ENCODE measurements at regions of chr3 and their contacts with region 1.

Region 1: DNA sequence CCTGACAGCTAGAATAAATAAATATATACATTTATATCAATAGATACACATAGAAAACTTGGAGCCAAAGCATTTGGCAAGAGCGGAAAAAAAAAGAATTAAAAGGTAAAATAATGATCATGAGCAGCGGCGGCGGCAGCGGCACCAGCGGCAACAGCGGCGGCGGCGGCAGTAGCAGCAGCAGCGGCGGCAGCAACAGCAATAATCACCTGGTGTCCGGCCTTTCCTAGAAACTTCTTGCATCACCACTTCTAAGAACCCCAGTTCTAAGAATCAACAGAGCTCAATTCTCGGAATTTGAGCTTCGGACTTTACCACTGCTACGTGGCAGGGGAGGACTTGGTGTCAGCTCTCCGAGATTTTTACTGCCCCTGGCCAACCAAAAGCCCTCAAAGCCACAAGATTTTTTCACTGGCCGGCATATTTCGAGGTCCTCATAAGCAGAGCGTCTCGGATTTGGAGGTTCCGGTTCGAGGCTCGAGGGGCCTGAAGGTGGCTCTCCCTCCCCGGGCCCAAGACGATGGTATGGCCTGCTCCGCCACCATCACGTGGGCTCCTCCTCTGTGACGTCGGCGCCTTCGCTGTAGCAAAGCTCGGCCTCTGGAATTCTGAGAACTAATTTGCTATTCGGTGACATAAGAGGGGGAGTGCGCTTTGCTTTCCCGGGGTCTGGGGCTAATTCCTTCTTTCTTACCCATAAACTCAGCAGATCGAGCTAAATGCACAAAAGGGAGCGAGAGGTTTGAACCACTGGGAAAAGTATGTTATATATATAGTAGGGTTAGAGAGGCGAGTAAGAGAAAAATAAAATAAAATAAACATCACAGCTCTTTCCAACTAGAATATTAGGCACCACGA is at the start of gene BCL6:
- DNase-seq: peak; percentile 94
- ATAC-seq: peak; percentile 42
- H3K4me3 Mint-ChIP-seq: peak within 1 kb of the TSS; percentile 100
- H3K27ac Mint-ChIP-seq: peak within 1 kb of the TSS; percentile 100
- H3K4me1 Mint-ChIP-seq: peaks cover 55% of the 10 kb centered on the region
- H3K27me3 Mint-ChIP-seq: no peaks in the 10 kb centered on the region
- total RNA-seq, gene BCL6: 11.8 to 12.6 TPM

Region 2: GRCh38 chr3:187430576-187430975 is 314.9 kb before region 1 on chr3:
- CTCF ChIA-PET with region 1: no interaction called
- POLR2A ChIA-PET with region 1: no interaction called
- DNase-seq: no peak
- ATAC-seq: no peak
- H3K4me3 Mint-ChIP-seq: no peak overlapping the region
- H3K27ac Mint-ChIP-seq: no peak overlapping the region
- H3K4me1 Mint-ChIP-seq: no peaks in the 10 kb centered on the region
- H3K27me3 Mint-ChIP-seq: peaks cover 11% of the 10 kb centered on the region

Region 3: GRCh38 chr3:187802928-187803259 is 57.5 kb after region 1 on chr3:
- CTCF ChIA-PET with region 1: interaction called, 101 read pairs
- POLR2A ChIA-PET with region 1: interaction called, 195 read pairs
- DNase-seq: peak; percentile 84
- ATAC-seq: peak; percentile 55
- H3K4me3 Mint-ChIP-seq: peak overlapping the region; percentile 39
- H3K27ac Mint-ChIP-seq: peak overlapping the region; percentile 93
- H3K4me1 Mint-ChIP-seq: peaks cover 83% of the 10 kb centered on the region
- H3K27me3 Mint-ChIP-seq: no peaks in the 10 kb centered on the region

Region 4: DNA sequence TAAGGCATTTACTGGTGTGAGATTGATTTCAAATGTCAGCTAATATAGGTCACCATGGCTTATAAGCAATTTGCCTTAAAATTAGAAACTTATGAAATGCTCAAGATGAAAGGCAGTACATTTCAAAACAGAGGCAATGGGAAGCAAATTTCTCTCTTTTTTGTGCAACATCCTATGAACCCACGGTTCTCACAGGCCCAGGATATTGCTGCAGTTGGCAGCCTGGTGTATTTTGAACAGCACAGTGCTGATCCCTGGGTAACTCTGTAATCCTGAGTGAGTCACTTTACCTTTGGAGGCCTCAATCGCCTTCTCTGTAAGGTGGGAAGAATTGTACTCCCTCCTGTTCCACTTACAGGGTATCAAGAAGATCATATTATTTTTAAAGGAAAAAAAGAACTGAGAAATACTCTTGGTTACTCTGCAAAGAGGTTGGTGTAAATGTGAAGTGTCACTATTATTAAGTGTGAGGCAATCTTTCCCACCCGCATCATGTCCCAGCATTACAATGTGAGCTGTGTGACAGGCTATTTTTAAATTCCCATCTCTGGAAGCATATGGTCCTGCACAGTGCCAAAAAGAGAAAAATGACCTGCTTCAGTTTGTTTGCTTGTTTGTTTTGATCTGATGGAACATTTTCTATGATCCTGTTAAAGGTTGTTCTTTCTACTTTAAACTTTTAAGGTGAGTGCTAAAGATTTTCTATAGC is 218.4 kb after region 1 on chr3:
- CTCF ChIA-PET with region 1: interaction called, 13 read pairs
- POLR2A ChIA-PET with region 1: interaction called, 14 read pairs
- DNase-seq: no peak
- ATAC-seq: peak; percentile 62
- H3K4me3 Mint-ChIP-seq: no peak overlapping the region
- H3K27ac Mint-ChIP-seq: no peak overlapping the region
- H3K4me1 Mint-ChIP-seq: peaks cover 41% of the 10 kb centered on the region
- H3K27me3 Mint-ChIP-seq: no peaks in the 10 kb centered on the region

Region 5: DNA sequence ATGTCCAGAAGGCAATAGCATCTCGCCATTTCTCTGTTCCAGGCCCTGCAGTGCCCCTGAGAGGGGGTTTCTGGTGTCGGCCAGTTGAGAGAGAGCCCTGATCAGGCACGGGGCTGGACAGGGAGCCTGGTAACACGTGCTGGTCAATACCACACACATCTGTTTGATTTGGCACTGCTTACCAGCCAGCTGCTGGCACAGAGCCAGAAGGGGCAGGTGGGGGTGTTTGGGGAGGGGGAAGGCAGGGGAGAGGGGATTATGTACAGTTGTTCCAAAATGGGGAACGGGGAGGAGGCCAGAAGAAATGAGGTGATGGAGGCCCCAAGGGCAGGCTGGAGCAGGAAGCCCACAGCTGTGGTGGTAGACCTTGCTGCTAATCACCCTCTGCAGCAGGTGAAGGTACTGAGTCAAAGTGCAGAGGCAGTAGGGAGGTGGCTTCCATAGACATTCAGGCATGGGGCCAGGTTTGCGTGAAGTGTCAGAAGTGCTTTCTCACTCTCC is 255.0 kb after region 1 on chr3:
- CTCF ChIA-PET with region 1: interaction called, 32 read pairs
- POLR2A ChIA-PET with region 1: interaction called, 52 read pairs
- DNase-seq: peak; percentile 43
- ATAC-seq: peak; percentile 54
- H3K4me3 Mint-ChIP-seq: peak overlapping the region; percentile 76
- H3K27ac Mint-ChIP-seq: peak overlapping the region; percentile 94
- H3K4me1 Mint-ChIP-seq: peaks cover 88% of the 10 kb centered on the region
- H3K27me3 Mint-ChIP-seq: no peaks in the 10 kb centered on the region

Region 6: DNA sequence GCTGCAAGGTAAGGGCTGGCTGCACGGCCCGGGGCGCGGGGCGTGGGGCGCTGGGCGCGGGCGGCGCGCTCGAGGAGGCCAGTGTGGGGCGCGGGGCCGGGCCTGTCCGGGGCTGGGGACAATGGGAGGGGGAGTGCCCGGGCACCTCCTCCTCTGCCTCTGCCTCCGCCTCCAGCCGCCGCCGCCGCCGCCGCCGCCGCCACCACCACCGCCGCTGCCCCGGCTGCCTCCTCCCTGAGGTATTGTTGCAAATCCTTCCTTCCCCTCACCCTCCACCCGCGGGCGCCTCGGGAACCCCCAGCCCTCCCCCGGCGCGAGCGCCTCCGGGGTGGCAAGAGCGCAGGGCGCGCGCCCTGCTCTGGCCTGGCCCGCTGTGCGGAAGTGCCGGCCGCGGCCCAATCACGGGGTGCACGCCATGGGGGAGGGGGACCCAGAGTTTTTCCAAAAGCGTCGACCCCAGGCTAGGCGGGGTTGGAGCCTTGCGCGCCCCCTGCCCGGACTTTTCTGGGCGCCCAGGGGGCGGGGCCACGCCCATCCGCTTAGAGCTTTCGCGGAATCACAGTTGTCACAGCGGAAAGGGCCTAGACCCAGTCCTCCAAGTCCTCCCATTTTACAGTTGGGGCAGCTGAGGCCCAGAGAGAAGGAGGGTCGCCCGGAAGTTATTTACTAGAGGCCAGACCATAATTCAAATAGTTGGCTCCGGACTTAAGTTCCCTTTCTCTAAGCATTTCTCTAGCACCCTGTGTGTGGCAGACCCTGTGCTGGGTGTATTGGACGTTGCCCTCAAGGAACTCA is 408.8 kb after region 1 on chr3 and contains the start of gene LPP:
- CTCF ChIA-PET with region 1: interaction called, 41 read pairs
- POLR2A ChIA-PET with region 1: interaction called, 92 read pairs
- DNase-seq: peak; percentile 92
- ATAC-seq: peak; percentile 84
- H3K4me3 Mint-ChIP-seq: peak within 1 kb of the TSS; percentile 90
- H3K27ac Mint-ChIP-seq: peak within 1 kb of the TSS; percentile 88
- H3K4me1 Mint-ChIP-seq: peaks cover 60% of the 10 kb centered on the region
- H3K27me3 Mint-ChIP-seq: no peaks in the 10 kb centered on the region
- total RNA-seq, gene LPP: 51.3 to 58.9 TPM

Region 7: GRCh38 chr3:188954590-188955208 is 1209.3 kb after region 1 on chr3:
- CTCF ChIA-PET with region 1: interaction called, 552 read pairs
- POLR2A ChIA-PET with region 1: interaction called, 40 read pairs
- DNase-seq: peak; percentile 80
- ATAC-seq: peak; percentile 69
- H3K4me3 Mint-ChIP-seq: no peak overlapping the region
- H3K27ac Mint-ChIP-seq: no peak overlapping the region
- H3K4me1 Mint-ChIP-seq: peaks cover 16% of the 10 kb centered on the region
- H3K27me3 Mint-ChIP-seq: no peaks in the 10 kb centered on the region